ENCODE measurements at regions of chr11 and their contacts with region 1.

Region 1: DNA sequence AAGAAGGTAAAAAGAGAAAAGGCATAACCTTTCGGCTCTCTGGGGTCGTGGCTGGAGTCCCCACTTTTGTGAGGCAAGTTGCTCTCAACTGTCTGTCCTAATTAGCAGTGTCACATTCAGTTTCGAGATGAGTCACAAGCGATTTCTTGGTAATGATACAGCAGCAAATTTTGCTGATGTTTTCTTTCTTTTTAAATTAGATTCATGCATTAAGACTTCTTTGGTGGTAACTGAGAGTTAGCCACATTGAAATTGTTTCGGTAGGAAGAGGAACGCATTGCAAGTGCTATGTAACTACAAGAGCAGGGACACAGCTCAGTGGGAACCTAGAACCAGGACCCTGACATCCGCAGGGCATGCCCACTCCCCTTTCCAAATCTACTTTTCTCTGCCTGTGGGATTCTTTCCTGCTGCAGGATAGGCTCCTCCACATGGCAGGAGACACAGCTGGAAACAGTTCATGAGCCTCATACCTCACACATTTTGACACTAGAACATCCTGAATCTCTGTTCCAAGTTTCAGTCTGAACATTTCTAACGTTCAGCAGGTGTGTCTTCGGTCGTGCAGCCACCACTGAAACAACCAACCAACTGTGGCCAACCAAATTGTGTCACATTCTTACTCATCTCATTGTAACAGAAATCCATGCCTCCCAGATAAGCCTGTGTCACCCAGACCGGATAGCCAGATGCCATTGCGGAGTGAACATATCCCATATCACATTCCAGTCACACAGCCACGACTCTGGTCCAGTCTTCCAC is 987.6 kb downstream of the NTM start:
- DNase-seq: peak; percentile 43
- H3K4me3 Mint-ChIP-seq: peak overlapping the region; percentile 45
- H3K27ac Mint-ChIP-seq: peak overlapping the region; percentile 90
- H3K4me1 Mint-ChIP-seq: peaks cover 45% of the 10 kb centered on the region
- H3K27me3 Mint-ChIP-seq: no peaks in the 10 kb centered on the region

Region 2: DNA sequence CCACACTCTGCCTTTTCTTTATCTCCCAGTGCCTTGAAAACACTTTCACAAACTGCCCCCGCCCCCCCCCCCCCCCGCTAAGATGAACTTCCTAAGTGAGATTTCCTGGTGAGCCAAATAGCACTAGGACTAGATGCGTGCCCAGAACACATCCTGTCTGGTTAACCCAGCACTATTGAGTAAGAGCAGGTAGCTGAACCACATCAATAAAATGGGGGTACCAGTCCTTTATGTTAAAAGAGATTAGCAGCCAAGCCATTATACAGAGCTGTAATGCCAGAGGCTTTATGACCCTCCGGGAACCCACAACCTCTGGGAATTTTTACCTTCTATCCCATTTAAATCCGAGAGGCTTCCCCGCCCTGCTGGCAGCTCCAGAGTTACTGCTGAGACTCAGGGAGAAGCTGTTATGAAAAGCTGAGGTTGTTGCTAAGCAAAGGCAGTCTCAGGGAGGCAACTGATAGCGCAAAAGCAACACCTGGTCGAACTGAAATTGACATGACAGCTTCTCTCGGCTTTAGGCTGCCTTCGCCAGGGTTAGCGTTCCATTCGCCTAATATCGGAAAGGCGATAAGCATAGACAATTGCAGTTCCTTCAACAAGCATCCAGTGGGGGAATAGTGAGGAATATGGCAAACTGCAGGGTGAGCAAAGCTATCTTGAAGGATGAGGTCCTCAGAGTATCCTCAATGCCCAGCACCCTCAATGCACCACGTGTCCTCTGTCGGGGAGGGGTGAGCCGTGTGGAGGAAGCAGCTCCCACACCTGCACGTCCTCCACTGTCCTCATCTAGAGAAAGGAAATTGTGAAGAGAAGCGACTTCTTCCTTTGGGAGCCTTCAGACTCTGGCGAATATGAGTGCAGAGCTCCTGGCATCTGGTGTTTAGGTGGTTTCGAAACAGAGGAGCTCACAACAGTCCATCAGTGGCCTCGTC is 10.6 kb before region 1 on chr11:
- CTCF ChIA-PET with region 1: interaction called, 4 read pairs
- POLR2A ChIA-PET with region 1: interaction called, 12 read pairs
- DNase-seq: peak; percentile 32
- H3K4me3 Mint-ChIP-seq: no peak overlapping the region
- H3K27ac Mint-ChIP-seq: no peak overlapping the region
- H3K4me1 Mint-ChIP-seq: peaks cover 50% of the 10 kb centered on the region
- H3K27me3 Mint-ChIP-seq: peaks cover 4% of the 10 kb centered on the region